Activated T-helper 1 cell treated with anti-CD3 and anti-CD28 coated beads, Interleukin-12 subunit alpha, Interleukin-12 subunit beta, Interleukin-2, Interleukin-4 antibody, amounts not matched to agents 30 ng/mL and 10 ng/mL and 1 ng/mL, durations not matched to agents 14 hours and 24 hours and 36 hours (primary cell): ENCODE measurements at regions of chr3 and their contacts with region 1.

Region 1: DNA sequence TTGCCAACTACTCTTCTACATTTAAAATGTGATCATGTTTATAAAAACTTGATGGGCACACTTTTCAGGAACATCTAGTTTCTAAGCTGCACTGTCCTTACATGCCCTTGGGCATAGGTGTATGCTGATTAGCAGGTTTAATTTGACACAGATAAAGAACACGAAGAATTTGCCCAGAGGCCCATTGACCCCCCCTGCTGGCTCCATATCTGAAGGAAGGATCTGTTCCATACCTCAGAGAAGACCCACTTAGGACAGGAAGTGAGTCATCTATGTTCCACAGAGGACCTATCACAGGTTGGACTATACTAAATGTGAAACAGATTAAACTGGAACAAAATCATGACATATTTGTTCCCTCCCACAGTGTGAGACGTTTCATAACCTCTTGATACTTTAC is 92.8 kb upstream of the LPP start:
- DNase-seq: peak; percentile 38
- H3K4me3 Mint-ChIP-seq: peak overlapping the region; percentile 61
- H3K27ac Mint-ChIP-seq: peak overlapping the region; percentile 87
- H3K4me1 Mint-ChIP-seq: peaks cover 53% of the 10 kb centered on the region
- H3K27me3 Mint-ChIP-seq: no peaks in the 10 kb centered on the region

Region 2: GRCh38 chr3:187662848-187663409 is 398.2 kb before region 1 on chr3:
- intact Hi-C with region 1: no loop called
- DNase-seq: no peak
- H3K4me3 Mint-ChIP-seq: no peak overlapping the region
- H3K27ac Mint-ChIP-seq: no peak overlapping the region
- H3K4me1 Mint-ChIP-seq: no peaks in the 10 kb centered on the region
- H3K27me3 Mint-ChIP-seq: peaks cover 17% of the 10 kb centered on the region

Region 3: DNA sequence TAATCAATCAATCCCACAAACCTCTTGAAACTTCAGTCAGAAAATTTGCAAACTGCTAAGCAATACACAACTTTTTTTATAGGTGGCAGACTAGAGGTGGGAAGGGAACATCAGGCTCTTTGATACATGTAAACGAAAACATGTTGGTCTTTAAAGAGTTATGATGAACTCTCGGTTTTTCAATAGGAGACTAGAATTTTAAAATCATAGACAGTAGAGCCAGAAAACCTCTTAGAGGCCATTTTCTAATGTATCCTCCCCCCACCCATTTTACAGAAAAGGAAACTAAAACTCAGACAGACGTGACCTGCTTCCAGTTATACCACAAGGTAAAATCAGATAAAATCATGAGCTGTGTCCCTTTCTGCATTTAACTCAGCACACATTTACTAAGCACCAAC is 86.3 kb before region 1 on chr3:
- intact Hi-C with region 1: loop called (anchors 1 kb)
- DNase-seq: no peak
- H3K4me3 Mint-ChIP-seq: peak overlapping the region; percentile 59
- H3K27ac Mint-ChIP-seq: peak overlapping the region; percentile 94
- H3K4me1 Mint-ChIP-seq: peaks cover 62% of the 10 kb centered on the region
- H3K27me3 Mint-ChIP-seq: peaks cover 2% of the 10 kb centered on the region

Region 4: DNA sequence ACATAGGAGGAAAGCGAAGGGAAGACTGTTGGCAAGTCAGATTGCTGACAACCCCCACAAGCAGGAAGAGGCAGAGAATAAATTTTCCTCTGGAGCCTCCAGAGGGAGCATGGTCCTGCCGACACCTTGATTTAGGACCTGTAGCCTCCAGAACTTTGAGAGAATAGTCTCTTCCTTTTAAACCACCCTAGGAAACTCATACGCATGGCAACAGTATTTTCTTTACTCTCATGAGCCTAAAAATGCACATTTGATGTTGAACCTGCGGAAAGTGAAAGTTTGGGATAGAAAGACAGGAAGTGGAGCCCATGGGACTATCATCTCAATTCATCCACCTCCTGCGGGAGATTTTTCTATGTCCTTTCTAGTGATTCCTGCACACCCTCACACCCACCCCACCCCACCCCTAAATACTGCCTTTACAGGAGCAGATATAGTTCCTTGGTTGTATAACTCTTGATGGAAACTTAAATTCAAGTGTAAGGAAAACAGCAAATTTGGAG is 23.9 kb before region 1 on chr3:
- intact Hi-C with region 1: no loop called
- DNase-seq: no peak
- H3K4me3 Mint-ChIP-seq: no peak overlapping the region
- H3K27ac Mint-ChIP-seq: no peak overlapping the region
- H3K4me1 Mint-ChIP-seq: peaks cover 10% of the 10 kb centered on the region
- H3K27me3 Mint-ChIP-seq: peaks cover 5% of the 10 kb centered on the region

Region 5: DNA sequence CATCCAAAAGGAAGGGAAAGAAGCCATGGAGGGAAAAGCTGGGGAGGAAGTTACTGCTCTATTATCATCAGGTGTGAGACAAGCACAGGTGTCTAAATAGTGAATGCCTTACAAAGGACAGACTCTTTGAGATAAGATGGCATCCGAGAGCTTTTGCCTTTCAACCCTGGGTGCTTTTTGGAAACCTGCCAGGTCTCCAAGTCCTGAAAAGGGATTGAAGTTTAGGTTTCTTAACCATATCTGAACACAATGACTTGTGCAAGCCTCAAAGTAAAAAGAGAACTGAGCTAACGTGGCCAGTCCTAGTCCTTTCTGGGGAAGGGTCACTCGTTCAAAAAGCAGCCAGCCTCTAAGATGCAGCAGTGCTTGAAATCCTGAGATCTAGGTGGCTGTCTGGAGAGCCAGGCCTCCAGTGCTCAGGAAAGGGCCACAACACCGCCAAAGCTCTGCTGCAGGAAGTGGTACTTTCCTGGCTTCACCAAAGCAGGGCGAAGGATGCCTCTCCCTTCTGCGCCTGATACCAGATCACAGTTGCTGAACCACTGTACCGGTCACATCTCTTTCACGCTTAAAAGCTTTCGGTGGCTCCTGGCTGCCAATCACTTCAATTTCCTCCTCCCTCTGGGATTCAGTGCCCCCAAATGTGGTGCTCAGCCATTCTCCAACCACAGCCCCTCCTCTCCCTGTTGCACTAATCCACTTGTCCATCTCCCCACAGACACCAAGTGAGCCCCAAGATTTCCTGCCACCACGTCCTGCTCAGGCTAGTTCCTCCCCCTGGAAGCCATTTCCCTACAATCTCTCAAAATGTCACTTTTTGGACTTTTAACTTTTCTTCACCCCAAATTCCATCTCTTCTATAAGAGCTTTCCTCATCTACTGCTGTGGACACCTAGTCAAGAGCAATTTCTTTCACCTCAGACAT is 11.3 kb before region 1 on chr3:
- intact Hi-C with region 1: loop called (anchors 1 kb)
- DNase-seq: peak; percentile 24
- H3K4me3 Mint-ChIP-seq: peak overlapping the region; percentile 9
- H3K27ac Mint-ChIP-seq: peak overlapping the region; percentile 36
- H3K4me1 Mint-ChIP-seq: peaks cover 31% of the 10 kb centered on the region
- H3K27me3 Mint-ChIP-seq: peaks cover 10% of the 10 kb centered on the region

Region 6: DNA sequence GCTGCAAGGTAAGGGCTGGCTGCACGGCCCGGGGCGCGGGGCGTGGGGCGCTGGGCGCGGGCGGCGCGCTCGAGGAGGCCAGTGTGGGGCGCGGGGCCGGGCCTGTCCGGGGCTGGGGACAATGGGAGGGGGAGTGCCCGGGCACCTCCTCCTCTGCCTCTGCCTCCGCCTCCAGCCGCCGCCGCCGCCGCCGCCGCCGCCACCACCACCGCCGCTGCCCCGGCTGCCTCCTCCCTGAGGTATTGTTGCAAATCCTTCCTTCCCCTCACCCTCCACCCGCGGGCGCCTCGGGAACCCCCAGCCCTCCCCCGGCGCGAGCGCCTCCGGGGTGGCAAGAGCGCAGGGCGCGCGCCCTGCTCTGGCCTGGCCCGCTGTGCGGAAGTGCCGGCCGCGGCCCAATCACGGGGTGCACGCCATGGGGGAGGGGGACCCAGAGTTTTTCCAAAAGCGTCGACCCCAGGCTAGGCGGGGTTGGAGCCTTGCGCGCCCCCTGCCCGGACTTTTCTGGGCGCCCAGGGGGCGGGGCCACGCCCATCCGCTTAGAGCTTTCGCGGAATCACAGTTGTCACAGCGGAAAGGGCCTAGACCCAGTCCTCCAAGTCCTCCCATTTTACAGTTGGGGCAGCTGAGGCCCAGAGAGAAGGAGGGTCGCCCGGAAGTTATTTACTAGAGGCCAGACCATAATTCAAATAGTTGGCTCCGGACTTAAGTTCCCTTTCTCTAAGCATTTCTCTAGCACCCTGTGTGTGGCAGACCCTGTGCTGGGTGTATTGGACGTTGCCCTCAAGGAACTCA is 93.1 kb after region 1 on chr3 and contains the start of gene LPP:
- intact Hi-C with region 1: loop called (anchors 1 kb)
- DNase-seq: peak; percentile 90
- H3K4me3 Mint-ChIP-seq: peak within 1 kb of the TSS; percentile 89
- H3K27ac Mint-ChIP-seq: peak within 1 kb of the TSS; percentile 87
- H3K4me1 Mint-ChIP-seq: peaks cover 71% of the 10 kb centered on the region
- H3K27me3 Mint-ChIP-seq: no peaks in the 10 kb centered on the region
- total RNA-seq, gene LPP: 38.2 and 46.4 TPM in 2 replicates

Region 7: DNA sequence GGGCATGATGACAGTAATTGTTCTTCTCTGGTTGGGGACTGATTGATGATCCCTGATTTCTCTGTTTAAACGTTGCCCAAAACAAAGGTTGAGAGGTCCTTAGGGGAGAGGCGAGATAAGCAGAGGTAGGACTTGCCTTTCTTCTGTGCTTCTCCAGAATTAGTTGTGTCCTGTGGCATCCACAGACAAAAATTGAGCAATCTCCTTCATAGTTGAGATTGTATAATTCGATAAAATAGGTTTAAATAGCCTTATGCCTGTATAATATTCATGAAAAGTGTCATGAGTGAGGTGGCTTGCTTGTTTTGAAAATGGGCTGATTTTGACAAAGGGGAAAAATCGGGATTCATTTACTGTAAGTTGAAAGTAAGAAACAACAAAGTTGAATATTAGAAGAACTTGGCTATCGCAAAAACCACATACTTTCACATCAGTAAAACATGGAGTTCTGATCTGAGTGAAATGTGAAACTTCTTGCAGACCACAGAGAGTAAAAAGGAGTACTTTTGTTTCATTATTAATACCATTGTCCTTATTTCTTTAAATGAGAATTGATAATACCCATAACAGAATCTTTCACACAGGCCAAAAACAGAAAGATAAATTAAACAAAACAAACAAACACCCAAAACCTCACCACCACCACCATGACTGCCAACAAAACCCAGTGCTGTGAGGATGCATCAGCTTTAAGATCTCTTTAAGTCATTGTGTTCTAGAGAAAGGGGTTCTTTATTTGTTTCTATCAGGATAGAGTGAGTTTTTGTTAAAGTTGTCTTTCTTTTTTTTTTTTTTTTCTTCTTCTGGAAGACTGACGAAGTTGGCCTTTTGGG is 248.5 kb after region 1 on chr3:
- intact Hi-C with region 1: loop called (anchors 1 kb)
- DNase-seq: no peak
- H3K4me3 Mint-ChIP-seq: peak overlapping the region; percentile 40
- H3K27ac Mint-ChIP-seq: peak overlapping the region; percentile 64
- H3K4me1 Mint-ChIP-seq: peaks cover 35% of the 10 kb centered on the region
- H3K27me3 Mint-ChIP-seq: peaks cover 9% of the 10 kb centered on the region

Region 8: GRCh38 chr3:189148081-189148507 is 1087.0 kb after region 1 on chr3:
- intact Hi-C with region 1: loop called (anchors 5 kb)
- DNase-seq: peak; percentile 43
- H3K4me3 Mint-ChIP-seq: no peak overlapping the region
- H3K27ac Mint-ChIP-seq: no peak overlapping the region
- H3K4me1 Mint-ChIP-seq: peaks cover 47% of the 10 kb centered on the region
- H3K27me3 Mint-ChIP-seq: peaks cover 6% of the 10 kb centered on the region